ENCODE measurements at regions of chr11 and their contacts with region 1.

Region 1: GRCh38 chr11:6705905-6706535 is 22.9 kb upstream of the MRPL17 start:
- DNase-seq: no peak
- H3K4me3 ChIP-seq: no peak overlapping the region
- H3K27ac ChIP-seq: no peak overlapping the region
- H3K4me1 ChIP-seq: peaks cover 0 to 6% (median 0%) of the 10 kb centered on the region in 3 donors
- H3K27me3 ChIP-seq: no peaks in the 10 kb centered on the region
- CTCF ChIP-seq: peak; percentile 72 to 87 (median 84)
- POLR2A ChIP-seq: no peak

Region 2: DNA sequence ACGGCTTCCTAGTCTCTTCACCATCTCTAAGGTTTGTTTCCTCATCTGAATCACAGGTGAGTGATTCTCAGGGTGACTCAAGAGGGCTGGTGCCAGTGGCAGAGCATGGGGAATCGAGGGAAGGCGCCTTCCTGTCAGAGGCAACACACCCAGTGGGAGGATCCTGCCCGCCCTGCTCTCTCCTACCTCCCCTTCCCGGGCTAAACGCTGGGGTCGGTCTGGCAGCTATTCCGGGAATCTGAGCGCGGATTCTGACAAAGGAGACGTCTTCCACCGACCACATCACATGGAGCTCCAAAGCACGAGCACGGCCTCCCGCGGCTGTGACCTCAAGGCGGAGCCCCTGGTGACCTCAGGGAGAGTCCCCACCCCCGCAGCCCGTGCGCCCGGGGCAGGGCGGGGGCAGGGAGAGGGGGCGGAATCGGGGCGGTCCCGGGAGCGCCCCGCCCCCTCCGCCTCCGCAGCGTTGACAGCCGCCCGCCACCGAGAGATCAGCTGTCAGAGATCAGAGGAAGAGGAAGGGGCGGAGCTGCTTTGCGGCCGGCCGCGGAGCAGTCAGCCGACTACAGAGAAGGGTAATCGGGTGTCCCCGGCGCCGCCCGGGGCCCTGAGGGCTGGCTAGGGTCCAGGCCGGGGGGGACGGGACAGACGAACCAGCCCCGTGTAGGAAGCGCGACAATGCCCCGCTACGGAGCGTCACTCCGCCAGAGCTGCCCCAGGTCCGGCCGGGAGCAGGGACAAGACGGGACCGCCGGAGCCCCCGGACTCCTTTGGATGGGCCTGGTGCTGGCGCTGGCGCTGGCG is 315.9 kb before region 1 on chr11 and contains the start of gene SMPD1:
- intact Hi-C with region 1: loop called (anchors 10 kb)
- DNase-seq: peak; percentile 76
- H3K4me3 ChIP-seq: peak within 1 kb of the TSS; percentile 69 to 92 (median 84)
- H3K27ac ChIP-seq: peak within 1 kb of the TSS; percentile 90 to 93 (median 90)
- H3K4me1 ChIP-seq: peaks cover 12 to 58% (median 18%) of the 10 kb centered on the region in 3 donors
- H3K27me3 ChIP-seq: no peaks in the 10 kb centered on the region
- CTCF ChIP-seq: no peak
- POLR2A ChIP-seq: peak in 3 of 4 donors; percentile 69 to 87 (median 80)
- total RNA-seq, gene SMPD1: 11.6 to 21.4 (median 14.3) TPM

Region 3: DNA sequence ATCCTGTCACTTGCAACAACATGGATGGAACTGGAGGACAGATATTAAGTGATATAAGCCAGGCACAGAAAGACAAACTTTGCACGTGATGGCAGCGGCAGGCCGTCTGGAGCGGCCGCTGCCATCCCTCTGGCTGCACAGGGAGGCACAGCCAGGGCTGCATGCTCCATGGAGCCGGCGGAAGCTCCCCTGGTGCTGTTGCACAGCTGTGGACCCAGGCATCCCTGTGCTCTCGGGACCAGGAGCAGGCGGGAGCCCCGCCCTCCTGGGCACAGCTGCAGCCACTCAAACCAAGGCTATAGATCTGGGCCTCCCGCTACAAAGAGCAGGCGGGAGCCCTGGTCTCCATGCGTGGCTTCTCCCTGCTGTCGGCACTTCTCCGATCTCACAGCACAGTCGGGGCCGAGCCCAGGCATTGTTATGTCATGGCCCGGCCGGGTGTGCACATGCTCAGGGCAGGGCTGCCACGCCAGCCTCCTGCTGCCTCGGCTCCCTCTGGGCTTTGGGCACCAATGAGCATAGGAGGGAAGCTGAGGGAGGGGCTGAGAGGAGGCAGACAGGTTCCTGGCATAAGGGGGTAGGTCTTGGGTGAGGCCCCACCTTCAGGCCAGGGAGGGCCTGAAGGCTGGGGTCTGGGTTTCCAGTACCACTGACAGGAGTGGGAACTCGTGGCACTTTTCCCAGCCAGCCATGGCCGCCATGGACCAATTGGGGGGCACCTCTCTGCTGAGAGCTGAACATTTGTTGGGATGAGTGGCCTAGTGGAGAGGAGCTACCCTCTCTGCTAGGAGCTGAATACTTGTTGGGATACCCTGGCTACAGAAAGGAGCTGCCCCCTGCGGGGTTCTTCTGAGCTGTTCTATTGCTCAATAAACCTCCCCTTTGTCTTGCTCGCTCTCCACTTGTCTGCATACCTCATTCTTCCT is 119.3 kb before region 1 on chr11:
- intact Hi-C with region 1: no loop called
- DNase-seq: no peak
- H3K4me3 ChIP-seq: no peak overlapping the region
- H3K27ac ChIP-seq: no peak overlapping the region
- H3K4me1 ChIP-seq: peaks cover 0 to 19% (median 0%) of the 10 kb centered on the region in 3 donors
- H3K27me3 ChIP-seq: no peaks in the 10 kb centered on the region
- CTCF ChIP-seq: no peak
- POLR2A ChIP-seq: no peak

Measured in esophagus squamous epithelium (tissue), 5 donors.